Aorta (tissue), 5 donors: ENCODE measurements at regions of chr20 and their contacts with region 1.

Region 1: GRCh38 chr20:31652917-31653396 is 15.2 kb downstream of the COX4I2 start:
- DNase-seq: no peak
- ATAC-seq: no peak
- H3K4me3 ChIP-seq: no peak overlapping the region
- H3K27ac ChIP-seq: no peak overlapping the region
- H3K4me1 ChIP-seq: no peaks in the 10 kb centered on the region
- H3K27me3 ChIP-seq: no peaks in the 10 kb centered on the region

Region 2: DNA sequence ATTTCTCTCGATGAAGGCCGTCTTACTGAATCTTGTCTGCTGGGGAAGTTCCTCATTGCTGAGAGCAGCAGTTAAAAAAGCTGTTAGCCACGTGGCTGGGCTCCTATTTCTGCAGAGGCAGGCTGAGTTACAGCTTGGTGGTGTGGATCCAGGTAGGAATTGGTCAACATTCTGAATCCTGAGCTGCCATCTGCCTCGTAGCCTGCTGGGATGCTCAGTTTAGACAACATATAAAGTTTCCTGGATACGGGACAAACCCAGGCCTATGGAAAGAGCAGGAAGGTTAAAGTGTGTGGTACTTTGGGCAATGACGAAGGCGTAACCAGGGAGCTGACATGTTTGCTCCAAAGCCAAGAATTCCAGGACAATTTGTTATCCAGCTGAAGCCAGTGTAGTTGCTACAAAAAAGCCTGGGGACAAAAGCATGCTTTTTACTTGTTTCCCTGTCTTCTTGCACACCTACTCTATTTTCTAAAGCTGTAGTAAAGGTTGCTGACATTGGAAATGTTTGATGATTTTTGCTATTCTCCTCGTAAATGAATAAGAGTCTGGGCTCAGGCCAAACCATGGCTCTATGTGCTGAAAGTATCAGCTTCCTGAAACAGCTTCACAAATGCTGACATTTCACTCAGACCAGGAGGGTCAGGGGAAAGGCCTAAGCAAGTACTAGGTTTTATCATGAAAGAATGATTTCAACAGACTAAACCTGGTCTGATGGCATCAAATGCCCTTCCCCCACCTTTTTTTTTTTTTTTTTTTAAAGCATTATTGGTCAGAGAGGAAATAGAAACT is 153.8 kb after region 1 on chr20:
- intact Hi-C with region 1: loop called in 1 of 2 experiments (anchors 10 kb)
- DNase-seq: no peak
- ATAC-seq: peak; percentile 27
- H3K4me3 ChIP-seq: no peak overlapping the region
- H3K27ac ChIP-seq: peak overlapping the region in 1 of 2 donors; percentile 67
- H3K4me1 ChIP-seq: peaks cover 2 to 5% of the 10 kb centered on the region in 2 donors
- H3K27me3 ChIP-seq: no peaks in the 10 kb centered on the region

Region 3: GRCh38 chr20:32089637-32090362 is 436.8 kb after region 1 on chr20:
- intact Hi-C with region 1: no loop called
- DNase-seq: no peak
- ATAC-seq: no peak
- H3K4me3 ChIP-seq: no peak overlapping the region
- H3K27ac ChIP-seq: no peak overlapping the region
- H3K4me1 ChIP-seq: no peaks in the 10 kb centered on the region
- H3K27me3 ChIP-seq: no peaks in the 10 kb centered on the region